GM18951 (cell line): ENCODE measurements at regions of chr3 and their contacts with region 1.

Region 1: GRCh38 chr3:142279965-142280590 is 54.7 kb upstream of the GK5 start:
- POLR2A ChIP-seq: no peak

Region 2: GRCh38 chr3:142028243-142028777 is 251.8 kb before region 1 on chr3:
- in situ Hi-C with region 1: loop called (anchors 10 kb)
- POLR2A ChIP-seq: no peak

Region 3: GRCh38 chr3:142175478-142175877 is 104.6 kb before region 1 on chr3:
- in situ Hi-C with region 1: no loop called
- POLR2A ChIP-seq: no peak